ENCODE measurements at regions of chr1 and their contacts with region 1.

Region 1: DNA sequence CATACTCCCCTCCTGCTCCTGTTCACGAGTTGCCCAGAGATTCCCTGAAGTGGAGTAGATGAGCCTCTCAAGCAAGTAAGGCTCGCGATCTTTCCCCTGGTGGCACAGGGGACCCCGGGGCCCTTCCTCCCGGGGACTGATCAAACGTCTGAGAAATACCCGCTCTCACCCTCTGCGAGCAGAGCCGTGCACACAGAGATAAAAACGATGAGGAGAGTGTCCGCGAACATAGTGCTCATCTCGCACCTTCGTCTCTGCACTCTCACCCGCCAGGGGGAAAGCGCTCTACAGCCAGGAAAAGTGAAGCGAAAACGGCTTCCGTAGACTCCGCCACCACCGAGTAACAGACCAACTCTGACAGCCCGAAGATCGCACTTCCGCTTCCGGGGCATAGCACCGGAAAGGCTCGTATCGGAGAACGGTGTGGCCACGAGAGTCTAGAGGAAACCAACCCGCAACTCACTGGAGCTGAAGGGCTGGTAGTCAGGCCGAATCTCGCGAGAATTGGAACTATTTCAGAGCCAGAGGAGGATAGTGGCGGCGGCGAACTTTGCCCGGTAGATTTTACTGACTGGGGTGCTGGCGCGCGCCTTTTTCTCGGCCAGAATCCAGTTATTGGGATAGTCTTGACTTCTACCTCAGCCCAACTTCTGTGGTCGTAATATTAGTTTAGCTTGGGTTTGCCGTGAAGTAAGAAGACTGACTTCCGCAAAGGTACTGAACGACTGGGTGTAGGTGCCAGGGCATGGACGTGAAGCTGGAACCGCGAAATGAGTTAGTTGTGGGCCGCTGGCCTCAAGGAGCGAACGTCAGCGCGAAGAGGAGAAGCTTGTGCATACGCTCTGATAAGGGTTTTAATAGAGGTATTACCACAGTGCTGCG is at the start of gene TMCO1:
- DNase-seq: peak; percentile 99
- ATAC-seq: peak; percentile 100
- H3K4me3 ChIP-seq: peak within 1 kb of the TSS; percentile 66 to 88 (median 88)
- H3K27ac ChIP-seq: peak within 1 kb of the TSS; percentile 95
- H3K4me1 ChIP-seq: peaks cover 35% of the 10 kb centered on the region
- H3K27me3 ChIP-seq: no peaks in the 10 kb centered on the region; a peak in 1 of 5 replicates
- CTCF ChIP-seq: peak; percentile 48
- EP300 ChIP-seq: 0 out of 4 replicates have a peak, but pooled peaks of 1 of the 2 experiments have one; percentile 3
- POLR2A ChIP-seq: peak; percentile 83 to 88
- RAD21 ChIP-seq: peak; percentile 36; the same call in 1 of the 2 replicates
- total RNA-seq, gene TMCO1: 85.3 and 119 TPM in 2 replicates

Region 2: GRCh38 chr1:165586435-165586834 is 182.3 kb before region 1 on chr1:
- CTCF ChIA-PET with region 1: no interaction called
- POLR2A ChIA-PET with region 1: no interaction called
- in situ Hi-C with region 1: no loop called
- intact Hi-C with region 1: no loop called
- DNase-seq: no peak
- ATAC-seq: no peak
- H3K4me3 ChIP-seq: no peak overlapping the region
- H3K27ac ChIP-seq: no peak overlapping the region
- H3K4me1 ChIP-seq: no peaks in the 10 kb centered on the region
- H3K27me3 ChIP-seq: no peaks in the 10 kb centered on the region
- CTCF ChIP-seq: no peak
- EP300 ChIP-seq: no peak
- POLR2A ChIP-seq: no peak
- RAD21 ChIP-seq: no peak

Region 3: GRCh38 chr1:165697881-165698760 is 70.6 kb before region 1 on chr1 and contains the start of gene ALDH9A1:
- CTCF ChIA-PET with region 1: no interaction called
- POLR2A ChIA-PET with region 1: interaction called, 10 read pairs
- in situ Hi-C with region 1: no loop called
- intact Hi-C with region 1: no loop called
- DNase-seq: peak; percentile 32
- ATAC-seq: peak; percentile 94
- H3K4me3 ChIP-seq: peak within 1 kb of the TSS; percentile 83 to 96 (median 85)
- H3K27ac ChIP-seq: peak within 1 kb of the TSS; percentile 82
- H3K4me1 ChIP-seq: peaks cover 57% of the 10 kb centered on the region
- H3K27me3 ChIP-seq: no peaks in the 10 kb centered on the region; a peak in 2 of 5 replicates
- CTCF ChIP-seq: peak; percentile 74
- EP300 ChIP-seq: no peak
- POLR2A ChIP-seq: peak in 1 of 2 experiments; percentile 78; a peak in 2 of 4 replicates
- RAD21 ChIP-seq: no peak
- total RNA-seq, gene ALDH9A1: 38.5 and 52.7 TPM in 2 replicates

Region 4: GRCh38 chr1:165787741-165788140 is 19.0 kb after region 1 on chr1:
- CTCF ChIA-PET with region 1: no interaction called
- POLR2A ChIA-PET with region 1: interaction called, 20 read pairs
- in situ Hi-C with region 1: no loop called
- intact Hi-C with region 1: no loop called
- DNase-seq: no peak
- ATAC-seq: no peak
- H3K4me3 ChIP-seq: no peak overlapping the region
- H3K27ac ChIP-seq: no peak overlapping the region
- H3K4me1 ChIP-seq: peaks cover 25% of the 10 kb centered on the region
- H3K27me3 ChIP-seq: no peaks in the 10 kb centered on the region; a peak in 1 of 5 replicates
- CTCF ChIP-seq: no peak
- EP300 ChIP-seq: no peak
- POLR2A ChIP-seq: no peak
- RAD21 ChIP-seq: no peak

Region 5: DNA sequence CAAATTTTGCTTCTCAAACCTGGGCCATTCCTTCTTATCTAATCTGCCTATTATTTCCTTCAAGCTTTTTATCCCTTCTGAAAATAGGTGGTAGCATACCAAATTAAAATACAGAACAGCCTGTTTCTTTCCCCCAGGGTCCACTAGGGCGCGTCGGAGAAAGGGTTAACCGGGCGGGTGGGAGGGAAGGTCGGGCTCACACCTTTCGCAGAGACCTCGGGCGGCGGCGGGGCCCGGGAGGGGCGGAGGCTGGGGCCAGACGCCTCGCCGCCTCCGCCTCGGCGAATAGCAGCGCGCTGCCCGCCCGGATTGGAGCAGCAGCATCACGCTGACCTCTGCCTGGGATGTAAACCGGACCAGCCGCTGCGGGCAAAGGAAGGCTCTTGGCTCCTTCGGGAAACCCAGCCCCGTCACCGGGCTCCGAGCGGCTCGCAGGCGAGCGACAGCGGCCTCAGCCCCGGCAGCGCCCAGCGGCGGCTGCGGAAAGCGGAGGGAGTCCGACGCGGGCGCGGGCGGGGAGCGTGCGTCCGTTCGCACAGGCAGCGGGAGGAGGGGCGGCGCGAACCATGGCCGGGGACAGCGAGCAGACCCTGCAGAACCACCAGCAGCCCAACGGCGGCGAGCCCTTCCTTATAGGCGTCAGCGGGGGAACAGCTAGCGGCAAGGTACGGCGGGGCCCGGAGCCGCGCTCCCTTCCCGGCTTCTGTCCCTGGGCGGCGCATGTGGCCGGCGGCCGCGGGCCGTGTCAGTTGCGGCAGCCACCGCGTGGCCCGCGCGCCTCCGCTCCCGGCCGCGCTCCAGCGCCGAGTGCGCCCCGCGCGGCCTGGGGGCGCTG is 58.7 kb after region 1 on chr1 and contains the start of gene UCK2:
- CTCF ChIA-PET with region 1: no interaction called
- POLR2A ChIA-PET with region 1: interaction called, 22 read pairs
- in situ Hi-C with region 1: no loop called
- intact Hi-C with region 1: loop called (anchors 1 kb)
- DNase-seq: peak; percentile 71
- ATAC-seq: peak; percentile 90
- H3K4me3 ChIP-seq: peak within 1 kb of the TSS; percentile 81 to 87 (median 86)
- H3K27ac ChIP-seq: peak within 1 kb of the TSS; percentile 94
- H3K4me1 ChIP-seq: peaks cover 37% of the 10 kb centered on the region
- H3K27me3 ChIP-seq: peaks cover 0 to 4% of the 10 kb centered on the region in 2 experiments; a peak in 2 of 5 replicates
- CTCF ChIP-seq: no peak
- EP300 ChIP-seq: no peak
- POLR2A ChIP-seq: peak; percentile 74 to 84
- RAD21 ChIP-seq: peak; percentile 66
- total RNA-seq, gene UCK2: 61.2 and 64.3 TPM in 2 replicates

Region 6: GRCh38 chr1:165871311-165872067 is 102.7 kb after region 1 on chr1:
- CTCF ChIA-PET with region 1: no interaction called
- POLR2A ChIA-PET with region 1: interaction called, 7 read pairs
- in situ Hi-C with region 1: no loop called
- intact Hi-C with region 1: loop called (anchors 1 kb)
- DNase-seq: peak; percentile 92
- ATAC-seq: peak; percentile 99
- H3K4me3 ChIP-seq: no peak overlapping the region
- H3K27ac ChIP-seq: peak overlapping the region; percentile 67
- H3K4me1 ChIP-seq: peaks cover 35% of the 10 kb centered on the region
- H3K27me3 ChIP-seq: no peaks in the 10 kb centered on the region
- CTCF ChIP-seq: peak; percentile 92
- EP300 ChIP-seq: peak in 1 of 2 experiments; percentile 35; a peak in 1 of 4 replicates
- POLR2A ChIP-seq: no peak
- RAD21 ChIP-seq: peak; percentile 64

Measured in HepG2 (cell line).